Activated CD4-positive, alpha-beta memory T cell treated with anti-CD3 and anti-CD28 coated beads for 36 hours (primary cell): ENCODE measurements at regions of chr18 and their contacts with region 1.

Region 1: GRCh38 chr18:46173393-46174341 is 69.5 kb downstream of the HAUS1 start:
- DNase-seq: peak; percentile 96
- H3K4me3 Mint-ChIP-seq: peak overlapping the region; percentile 97
- H3K27ac Mint-ChIP-seq: peak overlapping the region; percentile 99
- H3K4me1 Mint-ChIP-seq: peaks cover 42% of the 10 kb centered on the region
- H3K27me3 Mint-ChIP-seq: no peaks in the 10 kb centered on the region

Region 2: DNA sequence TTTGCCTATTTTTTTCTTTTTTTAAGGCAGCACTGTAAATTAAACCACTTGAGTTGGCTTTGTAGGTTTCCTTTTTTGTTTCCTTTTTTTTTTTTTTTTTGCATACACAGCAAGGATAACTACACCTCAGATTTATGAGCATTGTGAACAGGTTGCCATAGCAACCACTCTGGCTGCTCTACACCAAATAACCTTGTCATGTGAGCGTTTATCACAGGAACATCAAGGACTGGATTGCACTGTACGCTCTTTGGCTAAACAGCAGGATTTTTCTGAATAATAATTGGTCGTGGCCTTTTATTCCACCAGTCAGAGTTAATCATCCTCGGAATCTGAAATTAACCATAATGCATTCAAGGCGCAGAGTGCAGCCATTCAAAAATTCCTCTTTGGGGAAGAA is 757.5 kb before region 1 on chr18:
- CTCF ChIA-PET with region 1: no interaction called
- POLR2A ChIA-PET with region 1: no interaction called
- intact Hi-C with region 1: no loop called
- DNase-seq: no peak
- H3K4me3 Mint-ChIP-seq: no peak overlapping the region
- H3K27ac Mint-ChIP-seq: no peak overlapping the region
- H3K4me1 Mint-ChIP-seq: no peaks in the 10 kb centered on the region
- H3K27me3 Mint-ChIP-seq: peaks cover 1% of the 10 kb centered on the region

Region 3: GRCh38 chr18:46133534-46133933 is 40.1 kb before region 1 on chr18:
- CTCF ChIA-PET with region 1: no interaction called
- POLR2A ChIA-PET with region 1: no interaction called
- intact Hi-C with region 1: no loop called
- DNase-seq: no peak
- H3K4me3 Mint-ChIP-seq: no peak overlapping the region
- H3K27ac Mint-ChIP-seq: no peak overlapping the region
- H3K4me1 Mint-ChIP-seq: no peaks in the 10 kb centered on the region
- H3K27me3 Mint-ChIP-seq: no peaks in the 10 kb centered on the region

Region 4: GRCh38 chr18:46155641-46156051 is 18.0 kb before region 1 on chr18:
- CTCF ChIA-PET with region 1: interaction called, 63 read pairs
- POLR2A ChIA-PET with region 1: interaction called, 11 read pairs
- intact Hi-C with region 1: loop called (anchors 1 kb)
- DNase-seq: peak; percentile 67
- H3K4me3 Mint-ChIP-seq: peak overlapping the region; percentile 10
- H3K27ac Mint-ChIP-seq: peak overlapping the region; percentile 94
- H3K4me1 Mint-ChIP-seq: peaks cover 64% of the 10 kb centered on the region
- H3K27me3 Mint-ChIP-seq: no peaks in the 10 kb centered on the region

Region 5: GRCh38 chr18:46213295-46213694 is 39.6 kb after region 1 on chr18:
- CTCF ChIA-PET with region 1: interaction called, 125 read pairs
- POLR2A ChIA-PET with region 1: interaction called, 3 read pairs
- intact Hi-C with region 1: loop called (anchors 1 kb)
- DNase-seq: no peak
- H3K4me3 Mint-ChIP-seq: no peak overlapping the region
- H3K27ac Mint-ChIP-seq: no peak overlapping the region
- H3K4me1 Mint-ChIP-seq: peaks cover 86% of the 10 kb centered on the region
- H3K27me3 Mint-ChIP-seq: no peaks in the 10 kb centered on the region

Region 6: GRCh38 chr18:46239549-46239948 is 65.9 kb after region 1 on chr18:
- CTCF ChIA-PET with region 1: interaction called, 19 read pairs
- POLR2A ChIA-PET with region 1: no interaction called
- intact Hi-C with region 1: no loop called
- DNase-seq: no peak
- H3K4me3 Mint-ChIP-seq: no peak overlapping the region
- H3K27ac Mint-ChIP-seq: no peak overlapping the region
- H3K4me1 Mint-ChIP-seq: peaks cover 31% of the 10 kb centered on the region
- H3K27me3 Mint-ChIP-seq: no peaks in the 10 kb centered on the region

Region 7: DNA sequence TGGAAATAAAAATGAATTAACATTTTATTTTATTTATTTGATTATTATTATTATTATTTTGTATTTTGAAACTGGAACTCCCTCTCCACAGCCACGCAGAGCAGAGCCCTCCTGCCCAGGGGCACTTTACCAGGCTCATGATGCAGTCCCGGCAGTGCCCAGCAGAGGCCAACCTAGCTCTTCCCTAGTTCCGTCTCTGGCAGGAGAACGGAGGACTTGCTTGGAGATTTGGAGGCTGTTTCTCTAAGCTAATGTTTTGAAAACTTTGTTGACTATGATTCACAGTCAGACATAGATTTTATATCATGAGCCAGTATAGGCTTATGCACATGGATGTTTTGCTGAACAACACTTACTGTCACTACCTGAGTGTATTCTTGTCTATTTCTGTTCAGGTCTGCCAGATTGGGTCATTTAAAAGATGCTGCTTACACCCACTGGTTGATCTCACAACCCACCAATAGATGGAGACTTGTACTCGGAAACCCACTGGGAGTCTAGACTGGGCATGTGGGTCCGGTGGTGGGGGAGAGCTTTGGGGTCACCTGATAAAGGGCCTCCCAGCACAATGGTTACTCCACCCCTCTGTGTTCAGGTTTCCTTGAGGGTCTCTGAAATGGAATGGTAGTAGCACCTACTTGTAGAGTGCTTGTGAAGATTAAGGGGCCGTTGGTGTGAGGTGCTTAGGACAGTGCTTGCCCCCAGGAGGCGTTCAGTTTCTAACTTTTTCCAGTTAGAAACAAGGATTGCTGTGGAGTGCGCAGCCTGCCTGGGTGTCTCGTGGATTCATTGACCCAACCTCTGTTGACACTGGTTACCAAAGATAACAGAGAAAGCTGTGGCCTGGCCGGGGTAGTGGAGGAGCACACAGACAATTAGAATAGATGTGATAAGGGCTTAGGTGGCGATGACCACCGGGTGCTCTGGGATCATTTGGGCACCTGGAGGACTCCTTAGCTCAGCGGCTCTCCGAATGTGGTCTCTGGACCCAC is 107.8 kb after region 1 on chr18:
- CTCF ChIA-PET with region 1: interaction called, 61 read pairs
- POLR2A ChIA-PET with region 1: no interaction called
- intact Hi-C with region 1: loop called (anchors 5 kb)
- DNase-seq: peak; percentile 77
- H3K4me3 Mint-ChIP-seq: no peak overlapping the region
- H3K27ac Mint-ChIP-seq: no peak overlapping the region
- H3K4me1 Mint-ChIP-seq: peaks cover 17% of the 10 kb centered on the region
- H3K27me3 Mint-ChIP-seq: no peaks in the 10 kb centered on the region

Region 8: GRCh38 chr18:46481048-46481846 is 307.6 kb after region 1 on chr18:
- CTCF ChIA-PET with region 1: interaction called, 8 read pairs
- POLR2A ChIA-PET with region 1: no interaction called
- intact Hi-C with region 1: loop called (anchors 1 kb)
- DNase-seq: peak; percentile 64
- H3K4me3 Mint-ChIP-seq: no peak overlapping the region
- H3K27ac Mint-ChIP-seq: no peak overlapping the region
- H3K4me1 Mint-ChIP-seq: no peaks in the 10 kb centered on the region
- H3K27me3 Mint-ChIP-seq: peaks cover 2% of the 10 kb centered on the region